Activated CD8-positive, alpha-beta memory T cell treated with anti-CD3 and anti-CD28 coated beads, Interleukin-2, amount 10 ng/mL, durations not matched to agents 7 days and 5 days (primary cell): ENCODE measurements at regions of chr12 and their contacts with region 1.

Region 1: GRCh38 chr12:44000309-44000952 is 164.6 kb downstream of the TMEM117 start:
- DNase-seq: peak; percentile 49
- ATAC-seq: peak; percentile 78
- H3K4me3 Mint-ChIP-seq: no peak overlapping the region
- H3K27ac Mint-ChIP-seq: no peak overlapping the region
- H3K4me1 Mint-ChIP-seq: no peaks in the 10 kb centered on the region
- H3K27me3 Mint-ChIP-seq: no peaks in the 10 kb centered on the region

Region 2: GRCh38 chr12:43988838-43989560 is 11.4 kb before region 1 on chr12:
- CTCF ChIA-PET with region 1: no interaction called
- DNase-seq: no peak
- ATAC-seq: peak; percentile 85
- H3K4me3 Mint-ChIP-seq: peak overlapping the region; percentile 1
- H3K27ac Mint-ChIP-seq: peak overlapping the region; percentile 7
- H3K4me1 Mint-ChIP-seq: peaks cover 9% of the 10 kb centered on the region
- H3K27me3 Mint-ChIP-seq: no peaks in the 10 kb centered on the region

Region 3: GRCh38 chr12:44015335-44015941 is 15.0 kb after region 1 on chr12:
- CTCF ChIA-PET with region 1: interaction called, 12 read pairs
- DNase-seq: no peak
- ATAC-seq: peak; percentile 60
- H3K4me3 Mint-ChIP-seq: no peak overlapping the region
- H3K27ac Mint-ChIP-seq: no peak overlapping the region
- H3K4me1 Mint-ChIP-seq: no peaks in the 10 kb centered on the region
- H3K27me3 Mint-ChIP-seq: no peaks in the 10 kb centered on the region